ENCODE measurements at regions of chr12 and their contacts with region 1.

Region 1: DNA sequence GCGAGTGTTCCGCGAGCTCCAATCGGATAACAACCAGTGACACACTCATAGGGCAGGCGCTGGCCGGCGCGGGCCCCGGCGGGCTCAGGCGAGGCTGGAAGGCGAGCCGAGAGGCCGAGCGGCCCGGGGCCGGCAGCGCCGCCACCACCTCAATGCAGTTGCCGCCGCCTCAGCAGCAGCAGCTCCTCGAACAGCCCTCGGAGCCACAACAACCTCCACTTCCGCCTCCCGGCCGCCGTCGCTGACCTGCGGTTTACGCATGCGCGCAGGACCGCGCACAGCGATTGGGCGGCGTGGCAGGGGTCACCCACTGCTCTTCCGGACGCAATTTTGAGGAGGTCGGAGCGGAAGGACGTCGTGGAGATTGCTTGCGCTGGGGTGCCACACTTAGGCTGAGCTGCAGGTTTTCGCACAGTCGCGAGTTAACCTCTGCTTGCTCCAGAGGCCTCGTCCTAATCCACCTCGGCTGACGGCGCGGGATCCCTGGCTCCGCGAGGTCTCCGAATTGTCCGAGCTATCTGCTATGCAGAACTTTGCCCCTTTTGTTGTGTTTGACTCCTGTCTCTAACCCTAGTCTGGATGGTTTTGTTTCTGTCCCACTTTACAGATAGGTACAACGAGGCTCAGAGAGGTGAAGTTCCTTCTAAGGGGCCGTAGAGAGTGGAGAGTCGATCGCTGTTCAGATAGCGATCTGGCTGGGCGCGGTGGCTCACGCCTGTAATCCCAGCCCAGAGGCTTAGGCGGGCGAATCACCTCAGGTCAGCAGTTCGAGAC is at the starts of genes ACAD10 and BRAP:
- DNase-seq: peak; percentile 88 to 96 (median 95)
- H3K4me3 ChIP-seq: peak within 1 kb of the TSS; percentile 94
- H3K4me3 Mint-ChIP-seq: peak within 1 kb of the TSS; percentile 90 to 100 (median 96)
- H3K27ac ChIP-seq: peak within 1 kb of the TSS; percentile 84
- H3K27ac Mint-ChIP-seq: peak within 1 kb of the TSS; percentile 95 to 99 (median 96)
- H3K4me1 ChIP-seq: peaks cover 29% of the 10 kb centered on the region
- H3K4me1 Mint-ChIP-seq: peaks cover 38 to 54% (median 48%) of the 10 kb centered on the region in 3 donors
- H3K27me3 ChIP-seq: no peaks in the 10 kb centered on the region
- H3K27me3 Mint-ChIP-seq: peaks cover 0 to 4% of the 10 kb centered on the region in 2 donors
- total RNA-seq, gene ACAD10: 20.7 to 21.6 TPM
- total RNA-seq, gene BRAP: 23.2 to 25.9 TPM

Region 2: GRCh38 chr12:111812881-111813741 is 127.2 kb after region 1 on chr12:
- CTCF ChIA-PET with region 1: interaction called, 11 read pairs
- POLR2A ChIA-PET with region 1: interaction called, 3 read pairs
- DNase-seq: peak; percentile 41 to 73 (median 50)
- H3K4me3 ChIP-seq: no peak overlapping the region
- H3K4me3 Mint-ChIP-seq: peak overlapping the region in 4 of 7 donors; percentile 4 to 51 (median 25)
- H3K27ac ChIP-seq: no peak overlapping the region
- H3K27ac Mint-ChIP-seq: peak overlapping the region in 2 of 8 donors; percentile 24 to 78
- H3K4me1 ChIP-seq: peaks cover 7% of the 10 kb centered on the region
- H3K4me1 Mint-ChIP-seq: peaks cover 7 to 11% (median 10%) of the 10 kb centered on the region in 3 donors
- H3K27me3 ChIP-seq: no peaks in the 10 kb centered on the region
- H3K27me3 Mint-ChIP-seq: no peaks in the 10 kb centered on the region